Activated CD4-positive, alpha-beta memory T cell treated with anti-CD3 and anti-CD28 coated beads for 36 hours (primary cell): ENCODE measurements at regions of chr7 and their contacts with region 1.

Region 1: DNA sequence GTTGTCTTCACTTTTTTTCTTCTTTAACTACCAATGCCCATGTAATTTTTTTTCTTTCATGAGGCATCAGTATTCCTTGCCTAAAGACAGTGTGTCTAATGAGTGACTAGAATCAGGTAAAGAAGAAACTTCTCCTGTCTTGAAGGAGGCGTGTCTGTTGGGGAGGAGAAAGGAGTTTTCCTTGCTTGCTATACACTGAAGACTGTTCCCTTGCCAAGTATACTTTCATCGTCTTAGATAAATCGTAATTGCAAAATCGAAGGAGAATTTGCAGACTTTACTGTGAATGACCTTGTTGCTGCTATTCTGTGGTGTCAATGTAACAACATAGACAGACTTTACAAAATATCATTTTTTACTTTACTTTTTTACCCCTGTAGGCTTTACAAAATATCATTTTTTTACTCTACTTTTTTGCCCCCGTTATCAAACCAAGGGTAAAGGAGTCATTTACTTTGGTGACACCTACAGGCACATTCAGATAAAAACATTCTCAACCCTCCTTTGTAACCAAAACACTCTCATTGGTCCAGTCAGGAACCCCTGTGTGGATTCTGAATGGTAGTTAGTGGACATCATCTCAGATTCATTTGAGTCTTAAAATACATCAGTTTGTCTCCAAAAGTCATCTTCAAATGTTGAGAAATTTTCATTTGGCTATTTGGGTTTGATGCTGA is 232.4 kb downstream of the AHR start:
- DNase-seq: no peak
- H3K4me3 Mint-ChIP-seq: no peak overlapping the region
- H3K27ac Mint-ChIP-seq: no peak overlapping the region
- H3K4me1 Mint-ChIP-seq: peaks cover 3% of the 10 kb centered on the region
- H3K27me3 Mint-ChIP-seq: peaks cover 5% of the 10 kb centered on the region

Region 2: DNA sequence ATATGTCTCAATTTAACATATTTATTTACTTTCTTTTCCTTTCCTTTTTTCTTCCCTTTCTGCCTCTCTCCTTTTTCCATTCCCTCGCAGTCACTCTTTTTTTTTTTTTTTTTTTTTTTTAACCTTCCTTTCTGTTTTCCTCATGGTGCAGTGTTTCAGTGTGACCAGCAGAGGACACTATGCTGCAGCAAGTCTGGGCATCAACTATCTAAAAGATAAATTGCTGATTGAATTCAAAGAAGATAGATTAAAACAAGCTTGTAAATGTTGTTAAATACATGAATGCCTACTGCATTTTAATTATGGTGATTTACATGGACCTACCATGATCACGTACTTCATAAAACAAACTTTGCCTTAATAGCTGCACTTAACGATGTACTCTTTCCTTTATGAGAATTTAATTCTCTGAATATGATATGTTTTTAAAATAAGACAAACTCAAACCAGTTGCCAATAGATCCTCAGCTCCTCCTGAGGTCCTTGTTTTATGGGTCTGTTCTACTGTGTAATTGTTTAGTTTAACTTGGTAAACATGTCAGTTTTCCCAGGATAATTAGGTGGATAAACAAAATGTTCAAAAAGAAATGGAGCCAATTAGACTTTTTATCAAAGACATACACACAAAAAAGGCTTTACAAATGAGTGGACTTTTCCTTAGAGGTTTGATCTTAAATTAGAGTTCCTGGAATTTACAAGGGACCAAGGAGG is 548.1 kb before region 1 on chr7:
- CTCF ChIA-PET with region 1: interaction called, 12 read pairs
- POLR2A ChIA-PET with region 1: no interaction called
- intact Hi-C with region 1: loop called (anchors 2 kb)
- DNase-seq: peak; percentile 34
- H3K4me3 Mint-ChIP-seq: no peak overlapping the region
- H3K27ac Mint-ChIP-seq: no peak overlapping the region
- H3K4me1 Mint-ChIP-seq: peaks cover 2% of the 10 kb centered on the region
- H3K27me3 Mint-ChIP-seq: peaks cover 4% of the 10 kb centered on the region

Region 3: DNA sequence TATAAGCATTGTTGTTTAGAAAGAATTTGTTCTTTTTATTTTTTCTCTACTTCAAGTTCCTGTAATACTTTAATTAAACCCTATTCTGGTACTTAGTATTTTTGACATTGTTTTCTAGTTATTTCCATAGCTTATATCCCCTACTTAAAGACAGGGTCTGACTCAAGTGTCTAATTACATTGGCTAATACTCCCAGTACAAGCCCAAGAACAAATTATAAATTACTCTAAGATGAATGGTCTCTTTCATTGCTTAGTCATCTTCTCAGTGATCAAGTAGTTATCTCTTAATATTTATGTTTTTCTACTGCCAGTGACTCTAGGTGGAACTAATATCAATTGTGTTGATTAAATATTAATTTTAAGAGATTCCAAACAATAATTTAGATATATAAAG is 210.8 kb before region 1 on chr7:
- CTCF ChIA-PET with region 1: no interaction called
- POLR2A ChIA-PET with region 1: no interaction called
- intact Hi-C with region 1: loop called (anchors 5 kb)
- DNase-seq: no peak
- H3K4me3 Mint-ChIP-seq: no peak overlapping the region
- H3K27ac Mint-ChIP-seq: no peak overlapping the region
- H3K4me1 Mint-ChIP-seq: peaks cover 44% of the 10 kb centered on the region
- H3K27me3 Mint-ChIP-seq: no peaks in the 10 kb centered on the region